PC-9 (cell line): ENCODE measurements at regions of chr19 and their contacts with region 1.

Region 1: DNA sequence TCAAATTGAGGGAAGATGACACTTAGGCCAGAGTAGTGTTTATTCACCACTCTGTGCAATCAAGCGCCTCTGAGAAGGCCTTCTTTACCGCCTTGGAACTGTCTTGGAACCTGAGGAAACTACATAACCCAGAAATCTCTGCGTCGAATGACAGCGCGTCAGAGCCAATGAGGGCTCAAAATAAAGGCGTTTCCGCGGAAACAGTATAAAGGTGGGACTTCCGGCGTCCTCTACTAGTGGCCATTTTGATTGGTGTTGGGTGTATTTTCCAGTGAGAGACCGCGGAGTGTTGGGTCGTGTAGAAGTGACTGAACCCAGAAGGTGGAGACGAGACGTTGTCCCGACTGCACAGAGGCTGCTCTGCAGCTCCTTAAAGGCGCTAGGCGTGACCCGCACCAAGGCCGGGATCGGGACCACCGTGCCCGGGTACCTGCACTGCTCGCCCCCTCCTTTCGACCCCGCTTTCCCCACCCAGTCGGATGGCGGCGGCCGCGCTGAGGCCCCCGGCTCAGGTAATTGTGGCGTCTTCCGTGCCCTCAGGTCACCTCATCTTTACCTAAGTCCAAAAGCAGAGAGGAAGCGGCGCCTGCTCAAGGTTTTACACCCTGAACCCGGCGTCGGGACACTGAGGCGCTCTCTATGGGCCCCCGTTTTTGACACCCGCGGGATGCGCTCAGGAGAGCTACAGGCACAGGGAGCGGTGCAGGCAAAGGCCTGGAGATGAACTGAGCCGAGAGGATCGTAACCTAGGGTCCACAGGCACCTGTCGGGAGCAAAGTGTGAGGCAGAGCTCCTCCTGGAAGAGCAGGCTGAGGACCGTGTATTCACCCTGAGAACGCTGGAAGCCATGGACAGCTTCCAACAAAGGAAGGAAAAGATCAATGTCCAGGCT is at the start of gene ZNF776:
- DNase-seq: peak; percentile 78 to 89
- H3K4me3 ChIP-seq: peak within 1 kb of the TSS; percentile 98
- H3K27ac ChIP-seq: peak within 1 kb of the TSS; percentile 24; the same call in 1 of the 2 replicates
- H3K4me1 ChIP-seq: peaks cover 10% of the 10 kb centered on the region; the same call in 1 of the 2 replicates
- H3K27me3 ChIP-seq: no peaks in the 10 kb centered on the region
- CTCF ChIP-seq: no peak
- total RNA-seq, gene ZNF776: 16.9 and 17.8 TPM in 2 replicates

Region 2: DNA sequence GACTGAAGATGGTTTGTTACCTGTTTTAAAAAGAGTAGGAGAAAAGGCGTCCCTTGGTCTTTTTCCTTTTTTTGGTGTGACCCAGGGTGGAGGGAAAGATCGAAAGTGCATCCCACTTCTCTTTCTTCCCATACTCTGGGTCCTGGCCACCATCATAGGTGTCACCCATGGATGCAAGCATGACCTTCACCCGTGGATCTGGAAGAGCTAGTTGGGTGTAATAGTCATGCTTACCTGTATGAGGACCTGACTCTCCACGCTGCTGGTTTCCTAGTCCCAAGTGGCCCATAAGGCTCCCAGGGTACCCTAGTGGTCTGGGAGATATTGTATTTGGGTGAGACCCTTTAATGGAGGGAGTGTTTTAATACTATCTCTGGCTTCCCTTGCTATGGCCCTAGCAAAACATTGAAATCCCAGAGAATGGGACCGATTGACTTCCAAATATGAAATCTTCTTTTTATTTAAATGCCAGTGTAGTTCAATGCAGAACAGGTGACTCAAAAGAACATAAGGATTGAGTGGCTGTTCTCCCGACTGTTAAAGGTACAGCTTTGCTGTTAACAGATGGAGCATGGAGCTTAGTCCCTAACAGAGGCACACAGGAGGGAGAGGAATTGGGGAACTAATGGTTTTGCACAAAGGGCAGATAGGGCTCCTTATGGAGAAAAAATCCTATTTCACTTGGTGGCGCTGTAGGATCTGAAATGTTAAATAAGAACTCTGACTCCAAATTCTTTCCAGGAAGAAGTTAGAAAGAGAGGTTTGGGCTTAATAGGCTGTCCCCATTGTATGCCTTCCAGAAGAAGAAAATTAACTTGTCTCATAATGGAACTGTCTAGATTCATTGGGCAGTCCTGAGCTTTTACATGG is 180.2 kb before region 1 on chr19:
- CTCF ChIA-PET with region 1: no interaction called
- POLR2A ChIA-PET with region 1: no interaction called
- intact Hi-C with region 1: no loop called
- DNase-seq: no peak
- H3K4me3 ChIP-seq: no peak overlapping the region
- H3K27ac ChIP-seq: no peak overlapping the region
- H3K4me1 ChIP-seq: no peaks in the 10 kb centered on the region
- H3K27me3 ChIP-seq: no peaks in the 10 kb centered on the region; the same call in 1 of the 2 replicates
- CTCF ChIP-seq: no peak

Region 3: DNA sequence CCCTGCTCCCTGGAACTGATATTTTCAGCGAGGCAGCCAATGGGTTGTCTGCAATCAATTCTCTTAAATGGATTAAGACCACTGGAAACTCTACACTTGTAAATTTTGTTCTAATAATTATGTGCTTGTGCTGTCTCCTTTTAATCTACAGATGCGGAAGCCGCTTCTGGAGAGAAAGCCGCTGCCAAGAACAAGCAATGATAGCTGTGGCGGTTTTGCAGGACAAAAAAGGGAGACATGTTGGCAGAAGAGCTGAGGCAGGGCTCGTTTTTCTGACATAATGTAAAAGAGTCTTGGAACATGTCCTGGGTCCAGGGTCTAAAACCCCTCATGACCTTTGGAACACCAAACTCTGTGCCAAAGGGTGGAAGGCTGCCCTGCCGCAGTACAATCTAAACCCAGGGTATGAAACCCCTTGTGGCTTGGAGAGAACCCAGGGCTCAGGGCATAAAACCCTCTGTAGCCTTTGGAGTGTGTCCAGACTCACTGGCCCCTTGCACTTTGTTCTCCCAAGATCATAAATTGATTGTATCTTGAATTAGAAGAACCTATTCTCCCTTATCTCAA is 156.9 kb after region 1 on chr19:
- CTCF ChIA-PET with region 1: no interaction called
- POLR2A ChIA-PET with region 1: no interaction called
- intact Hi-C with region 1: loop called (anchors 10 kb)
- DNase-seq: no peak
- H3K4me3 ChIP-seq: no peak overlapping the region
- H3K27ac ChIP-seq: no peak overlapping the region
- H3K4me1 ChIP-seq: no peaks in the 10 kb centered on the region
- H3K27me3 ChIP-seq: no peaks in the 10 kb centered on the region
- CTCF ChIP-seq: peak; percentile 48; the same call in 1 of the 2 replicates